ENCODE measurements at regions of chr17 and their contacts with region 1.

Region 1: DNA sequence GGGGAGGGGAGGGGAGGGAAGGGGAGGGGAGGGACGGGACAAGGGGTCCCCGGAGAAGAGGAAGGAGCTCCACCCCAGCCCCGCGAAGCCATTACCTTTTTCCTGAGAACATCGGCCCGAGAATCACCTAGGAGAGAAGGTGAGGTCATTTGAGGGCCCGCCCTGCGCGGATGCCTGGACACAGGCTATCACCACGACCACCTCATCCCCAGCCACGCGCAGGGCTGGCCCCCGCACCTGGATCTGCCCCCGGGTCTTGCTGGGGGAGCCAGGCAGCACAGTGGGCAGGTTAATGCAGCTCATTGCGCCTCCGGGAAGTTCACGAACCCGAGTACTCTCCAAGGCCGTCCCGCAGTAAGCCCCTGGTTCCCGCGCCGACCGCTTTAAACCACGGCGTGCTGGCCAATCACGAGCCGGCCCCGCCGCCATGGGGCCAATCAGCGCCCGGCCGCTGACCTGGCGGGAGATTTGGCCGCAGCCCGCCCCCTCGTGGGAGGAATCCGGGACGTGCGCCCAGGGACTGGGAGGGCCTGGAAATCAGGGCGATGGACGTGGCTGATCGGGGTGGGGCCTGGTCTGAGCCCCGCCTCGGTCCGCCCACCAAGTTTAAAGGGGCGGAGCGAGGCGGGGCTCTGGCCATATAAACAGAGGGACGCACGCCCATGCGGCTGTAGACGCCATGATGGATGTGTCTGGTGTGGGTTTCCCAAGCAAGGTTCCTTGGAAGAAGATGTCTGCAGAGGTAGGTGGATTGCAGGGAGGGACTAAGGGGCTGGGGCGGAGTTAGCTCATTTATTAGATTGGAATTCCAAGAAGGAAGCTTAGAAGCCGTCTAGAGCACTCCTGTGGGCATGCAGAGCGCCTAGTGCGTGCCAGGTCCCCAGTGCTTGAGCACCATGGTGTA is at the starts of genes AFMID and TK1:
- DNase-seq: peak; percentile 92 to 100 (median 97)

Region 2: GRCh38 chr17:78208486-78208885 is 21.5 kb after region 1 on chr17:
- intact Hi-C with region 1: loop called (anchors 1 kb)
- DNase-seq: no peak